MCF 10A (cell line): ENCODE measurements at regions of chr5 and their contacts with region 1.

Region 1: DNA sequence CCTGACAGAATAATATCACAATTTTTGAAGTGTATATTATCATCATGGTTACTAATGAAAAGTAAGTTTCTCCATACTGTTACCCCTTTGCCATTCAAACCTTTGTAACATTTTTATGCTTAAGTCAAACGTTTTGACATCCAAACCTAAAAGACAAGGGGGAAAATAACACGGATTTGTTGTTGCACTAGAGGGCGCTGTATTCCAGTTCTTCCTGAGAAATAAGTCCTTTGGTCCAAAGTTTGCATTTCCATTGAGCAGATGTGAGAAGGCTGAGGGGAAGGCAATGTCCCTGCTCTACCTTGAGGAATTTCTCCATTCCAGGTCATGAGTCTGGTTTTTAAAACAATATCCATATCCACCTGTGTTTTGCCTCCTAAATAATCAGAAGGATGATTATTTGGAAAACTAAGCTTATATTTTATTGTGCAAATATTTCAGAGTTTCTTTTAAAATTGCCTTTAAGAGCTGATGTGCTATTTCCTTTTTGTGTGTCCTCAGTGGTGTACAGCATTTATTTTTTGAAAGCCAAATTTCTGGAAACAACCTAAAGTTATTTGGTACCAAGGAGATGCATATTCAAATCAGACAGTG is 9.7 kb downstream of the LECT2 start:
- DNase-seq: peak; percentile 94
- H3K4me3 Mint-ChIP-seq: no peak overlapping the region
- H3K27ac Mint-ChIP-seq: no peak overlapping the region
- H3K4me1 Mint-ChIP-seq: no peaks in the 10 kb centered on the region
- H3K27me3 Mint-ChIP-seq: no peaks in the 10 kb centered on the region
- CTCF ChIP-seq: peak; percentile 80

Region 2: DNA sequence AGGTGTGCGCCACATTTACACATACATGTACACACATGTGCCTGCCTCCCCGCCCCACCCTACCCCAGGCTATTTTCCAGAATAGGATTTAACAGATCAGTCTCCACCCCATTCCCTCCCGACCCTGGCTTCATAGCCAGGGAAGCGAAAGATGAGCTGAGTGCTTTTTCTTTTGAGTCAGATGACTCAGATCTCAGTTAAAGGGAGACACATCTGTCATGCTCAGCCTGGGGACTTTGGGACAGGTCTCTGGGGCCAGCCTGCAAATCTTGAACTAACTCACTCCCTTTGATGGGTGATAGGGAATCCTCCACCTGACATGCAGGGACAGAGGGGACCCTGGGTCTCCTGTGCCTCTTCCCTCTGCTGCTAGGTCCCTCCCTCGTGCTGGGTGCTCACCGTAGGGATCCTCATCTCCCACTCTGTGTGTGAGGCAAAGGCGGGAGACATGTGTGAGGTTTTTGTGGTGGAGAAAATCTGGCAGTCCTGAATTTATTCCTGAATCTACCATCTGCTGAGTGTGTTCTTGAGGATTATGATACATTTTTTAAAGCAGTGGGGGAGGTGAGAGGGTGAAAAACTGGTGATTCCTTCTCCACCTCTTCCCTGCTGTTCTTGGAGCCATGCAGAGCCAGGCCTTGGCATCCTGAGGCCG is 447.0 kb before region 1 on chr5:
- CTCF ChIA-PET with region 1: no interaction called
- POLR2A ChIA-PET with region 1: no interaction called
- intact Hi-C with region 1: no loop called
- DNase-seq: peak; percentile 51
- H3K4me3 Mint-ChIP-seq: no peak overlapping the region
- H3K27ac Mint-ChIP-seq: peak overlapping the region; percentile 17
- H3K4me1 Mint-ChIP-seq: peaks cover 40% of the 10 kb centered on the region
- H3K27me3 Mint-ChIP-seq: no peaks in the 10 kb centered on the region
- CTCF ChIP-seq: no peak

Region 3: GRCh38 chr5:135651150-135651549 is 293.9 kb before region 1 on chr5:
- CTCF ChIA-PET with region 1: no interaction called
- POLR2A ChIA-PET with region 1: no interaction called
- intact Hi-C with region 1: no loop called
- DNase-seq: peak; percentile 99
- H3K4me3 Mint-ChIP-seq: no peak overlapping the region
- H3K27ac Mint-ChIP-seq: peak overlapping the region; percentile 29
- H3K4me1 Mint-ChIP-seq: peaks cover 21% of the 10 kb centered on the region
- H3K27me3 Mint-ChIP-seq: no peaks in the 10 kb centered on the region
- CTCF ChIP-seq: no peak

Region 4: DNA sequence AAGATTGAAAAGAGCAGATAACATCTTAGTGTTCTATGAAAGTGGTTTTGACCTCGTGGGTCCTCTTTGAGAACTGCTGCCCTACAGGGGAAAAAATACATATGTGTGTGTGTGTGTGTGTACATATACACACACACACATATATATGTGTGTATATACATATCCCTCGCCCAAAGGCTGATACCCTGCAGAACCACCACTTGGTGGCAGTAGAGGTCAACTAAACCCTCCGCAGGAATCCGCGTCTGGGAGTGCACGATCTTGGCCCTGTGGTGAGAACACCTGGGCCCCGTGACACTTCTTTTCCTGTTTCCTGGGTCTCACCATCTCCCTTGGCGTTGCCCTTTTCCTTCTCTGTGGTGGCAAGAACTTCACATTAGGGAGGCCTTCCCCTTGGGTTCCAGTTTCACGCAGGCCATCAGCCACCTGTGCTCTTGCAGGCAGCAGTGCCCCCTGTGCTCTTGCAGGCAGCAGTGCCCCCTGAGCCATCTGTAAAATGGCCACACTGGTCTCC is 57.7 kb before region 1 on chr5:
- CTCF ChIA-PET with region 1: interaction called, 7 read pairs
- POLR2A ChIA-PET with region 1: no interaction called
- intact Hi-C with region 1: loop called (anchors 2 kb)
- DNase-seq: peak; percentile 90
- H3K4me3 Mint-ChIP-seq: no peak overlapping the region
- H3K27ac Mint-ChIP-seq: no peak overlapping the region
- H3K4me1 Mint-ChIP-seq: no peaks in the 10 kb centered on the region
- H3K27me3 Mint-ChIP-seq: peaks cover 37% of the 10 kb centered on the region
- CTCF ChIP-seq: peak; percentile 96

Region 5: DNA sequence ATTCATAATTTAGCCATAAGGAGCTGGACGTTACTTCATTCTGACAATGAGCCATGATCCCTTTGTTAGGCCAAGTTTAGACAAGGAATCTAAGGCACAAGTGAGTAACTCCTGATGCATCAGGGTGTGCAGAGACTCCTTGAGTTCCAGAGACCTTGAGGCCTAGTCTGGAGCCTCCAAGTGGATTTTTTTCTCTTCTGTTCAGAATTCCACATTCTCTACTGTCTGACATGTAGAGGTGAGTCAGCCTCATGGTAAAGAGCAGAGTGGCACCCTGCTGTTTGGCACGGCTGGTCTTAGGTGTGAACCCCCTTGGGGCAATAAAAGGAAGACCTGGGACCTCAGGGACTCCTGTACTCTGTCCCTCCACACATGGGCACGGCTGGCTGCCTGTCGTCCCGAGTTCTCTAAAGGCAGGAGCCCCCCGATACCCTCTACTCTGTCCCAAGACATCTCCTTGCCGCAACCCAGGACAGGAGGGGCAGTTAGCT is 61.7 kb after region 1 on chr5:
- CTCF ChIA-PET with region 1: interaction called, 27 read pairs
- POLR2A ChIA-PET with region 1: interaction called, 12 read pairs
- intact Hi-C with region 1: no loop called
- DNase-seq: peak; percentile 99
- H3K4me3 Mint-ChIP-seq: peak overlapping the region; percentile 15
- H3K27ac Mint-ChIP-seq: peak overlapping the region; percentile 93
- H3K4me1 Mint-ChIP-seq: peaks cover 51% of the 10 kb centered on the region
- H3K27me3 Mint-ChIP-seq: no peaks in the 10 kb centered on the region
- CTCF ChIP-seq: no peak

Region 6: GRCh38 chr5:136028782-136029742 is 84.0 kb after region 1 on chr5 and contains the start of gene TGFBI:
- CTCF ChIA-PET with region 1: interaction called, 17 read pairs
- POLR2A ChIA-PET with region 1: interaction called, 44 read pairs
- intact Hi-C with region 1: loop called (anchors 1 kb)
- DNase-seq: peak; percentile 87
- H3K4me3 Mint-ChIP-seq: peak within 1 kb of the TSS; percentile 80
- H3K27ac Mint-ChIP-seq: peak within 1 kb of the TSS; percentile 76
- H3K4me1 Mint-ChIP-seq: peaks cover 57% of the 10 kb centered on the region
- H3K27me3 Mint-ChIP-seq: no peaks in the 10 kb centered on the region
- CTCF ChIP-seq: no peak
- total RNA-seq, gene TGFBI: 623 and 892 TPM in 2 replicates

Region 7: DNA sequence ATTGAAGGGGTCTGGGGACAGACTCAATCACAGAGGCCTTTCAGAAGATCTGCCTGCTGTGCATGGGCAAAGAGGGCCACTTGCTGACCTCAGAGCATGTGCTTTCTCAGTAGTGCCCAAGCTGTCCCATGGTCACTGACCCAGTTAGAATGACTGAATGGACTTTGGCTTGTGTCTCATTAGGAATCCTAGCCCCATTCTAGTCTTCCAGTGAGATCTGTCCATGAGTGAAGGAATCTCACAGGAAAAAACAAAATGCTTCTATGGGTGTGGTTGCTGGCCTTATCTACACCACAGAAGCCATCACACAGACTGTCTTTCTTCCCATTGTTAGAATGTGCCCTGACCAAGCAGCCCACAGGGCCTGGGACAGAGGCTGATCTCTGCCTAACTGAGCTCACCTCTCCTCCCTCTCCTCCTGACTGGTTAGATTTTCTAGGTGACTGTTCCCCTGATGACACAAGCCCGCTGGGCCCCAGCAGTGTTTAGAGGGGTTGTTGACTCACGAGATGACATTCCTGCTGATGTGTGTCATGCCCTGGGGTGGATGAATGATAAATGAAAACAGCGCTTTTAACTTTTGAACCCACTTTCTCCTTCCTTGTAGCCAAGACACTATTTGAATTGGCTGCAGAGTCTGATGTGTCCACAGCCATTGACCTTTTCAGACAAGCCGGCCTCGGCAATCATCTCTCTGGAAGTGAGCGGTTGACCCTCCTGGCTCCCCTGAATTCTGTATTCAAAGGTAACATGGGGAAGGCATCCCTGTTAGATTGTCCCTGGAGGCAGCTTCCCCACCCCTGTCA is 108.5 kb after region 1 on chr5:
- CTCF ChIA-PET with region 1: interaction called, 54 read pairs
- POLR2A ChIA-PET with region 1: interaction called, 6 read pairs
- intact Hi-C with region 1: loop called (anchors 1 kb)
- DNase-seq: peak; percentile 98
- H3K4me3 Mint-ChIP-seq: no peak overlapping the region
- H3K27ac Mint-ChIP-seq: peak overlapping the region; percentile 85
- H3K4me1 Mint-ChIP-seq: peaks cover 52% of the 10 kb centered on the region
- H3K27me3 Mint-ChIP-seq: no peaks in the 10 kb centered on the region
- CTCF ChIP-seq: no peak

Region 8: DNA sequence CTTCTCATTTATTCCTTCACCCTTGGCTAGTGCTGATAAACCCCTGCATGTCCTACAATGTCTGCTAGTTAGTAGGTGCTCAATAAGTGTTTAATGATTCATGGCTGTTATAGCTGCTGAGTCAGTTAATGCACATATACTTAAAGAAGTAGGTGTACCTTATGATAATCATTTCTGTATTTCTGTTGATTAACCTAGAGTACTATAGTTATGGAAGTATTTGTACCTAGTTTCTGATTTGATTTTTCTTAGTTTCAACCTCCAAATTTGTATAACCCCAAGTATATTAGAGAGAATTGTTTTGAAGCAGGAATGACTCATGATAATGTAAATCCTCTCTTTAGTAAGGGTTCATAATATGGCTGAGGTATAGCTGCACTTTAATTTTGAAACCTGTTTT is 196.5 kb after region 1 on chr5:
- CTCF ChIA-PET with region 1: interaction called, 12 read pairs
- POLR2A ChIA-PET with region 1: no interaction called
- intact Hi-C with region 1: no loop called
- DNase-seq: no peak
- H3K4me3 Mint-ChIP-seq: no peak overlapping the region
- H3K27ac Mint-ChIP-seq: no peak overlapping the region
- H3K4me1 Mint-ChIP-seq: peaks cover 26% of the 10 kb centered on the region
- H3K27me3 Mint-ChIP-seq: no peaks in the 10 kb centered on the region
- CTCF ChIP-seq: no peak

Region 9: GRCh38 chr5:137344723-137345322 is 1399.8 kb after region 1 on chr5:
- CTCF ChIA-PET with region 1: no interaction called
- POLR2A ChIA-PET with region 1: no interaction called
- intact Hi-C with region 1: no loop called
- DNase-seq: peak; percentile 78
- H3K4me3 Mint-ChIP-seq: no peak overlapping the region
- H3K27ac Mint-ChIP-seq: no peak overlapping the region
- H3K4me1 Mint-ChIP-seq: peaks cover 8% of the 10 kb centered on the region
- H3K27me3 Mint-ChIP-seq: no peaks in the 10 kb centered on the region
- CTCF ChIP-seq: peak; percentile 94